ENCODE measurements at regions of chr2 and their contacts with region 1.

Region 1: DNA sequence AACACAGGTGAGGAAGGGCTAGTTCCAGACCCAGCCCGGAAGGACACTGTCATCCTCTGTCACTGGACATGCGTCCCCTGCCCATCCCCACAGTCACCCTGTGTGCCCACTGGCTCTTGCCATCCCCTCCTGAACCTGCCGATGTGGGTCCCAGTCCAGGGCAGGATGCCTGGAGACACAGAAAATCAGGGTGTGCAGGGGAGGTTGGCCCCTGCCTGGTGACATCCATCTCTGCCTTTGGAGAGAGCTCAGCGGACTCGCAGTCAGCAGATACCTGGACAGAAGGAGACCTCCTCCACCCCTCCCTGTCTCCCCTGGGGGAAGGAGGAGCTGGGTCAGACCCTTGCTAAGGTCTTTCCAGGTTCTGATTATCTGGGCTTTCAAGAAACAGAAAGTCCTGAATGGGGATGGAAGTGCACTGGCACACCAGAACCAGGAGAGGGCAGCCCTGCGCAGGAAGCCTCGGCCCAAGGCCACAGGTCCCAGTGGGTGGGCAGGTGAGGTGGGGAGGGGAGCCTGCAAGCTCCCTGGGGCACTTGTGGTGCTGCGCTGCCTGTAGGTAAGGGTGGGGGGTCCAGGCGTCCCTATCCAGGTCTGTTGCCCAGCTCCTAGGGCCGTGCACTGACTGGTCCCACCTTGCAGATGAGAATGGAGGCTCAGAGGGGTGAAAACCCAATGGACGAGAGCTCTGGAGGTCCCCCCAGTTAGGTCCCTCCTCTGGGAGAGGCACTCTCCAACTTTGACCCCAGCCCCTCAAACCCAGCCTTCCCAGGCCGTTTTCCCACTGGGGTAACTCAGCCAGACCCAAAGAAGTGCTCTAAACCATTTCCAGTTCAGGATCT is 9.7 kb upstream of the OTOS start:
- DNase-seq: peak; percentile 50
- H3K4me3 Mint-ChIP-seq: no peak overlapping the region
- H3K27ac Mint-ChIP-seq: no peak overlapping the region
- H3K4me1 Mint-ChIP-seq: no peaks in the 10 kb centered on the region
- H3K27me3 Mint-ChIP-seq: peaks cover 37% of the 10 kb centered on the region
- CTCF ChIP-seq: peak; percentile 83

Region 2: DNA sequence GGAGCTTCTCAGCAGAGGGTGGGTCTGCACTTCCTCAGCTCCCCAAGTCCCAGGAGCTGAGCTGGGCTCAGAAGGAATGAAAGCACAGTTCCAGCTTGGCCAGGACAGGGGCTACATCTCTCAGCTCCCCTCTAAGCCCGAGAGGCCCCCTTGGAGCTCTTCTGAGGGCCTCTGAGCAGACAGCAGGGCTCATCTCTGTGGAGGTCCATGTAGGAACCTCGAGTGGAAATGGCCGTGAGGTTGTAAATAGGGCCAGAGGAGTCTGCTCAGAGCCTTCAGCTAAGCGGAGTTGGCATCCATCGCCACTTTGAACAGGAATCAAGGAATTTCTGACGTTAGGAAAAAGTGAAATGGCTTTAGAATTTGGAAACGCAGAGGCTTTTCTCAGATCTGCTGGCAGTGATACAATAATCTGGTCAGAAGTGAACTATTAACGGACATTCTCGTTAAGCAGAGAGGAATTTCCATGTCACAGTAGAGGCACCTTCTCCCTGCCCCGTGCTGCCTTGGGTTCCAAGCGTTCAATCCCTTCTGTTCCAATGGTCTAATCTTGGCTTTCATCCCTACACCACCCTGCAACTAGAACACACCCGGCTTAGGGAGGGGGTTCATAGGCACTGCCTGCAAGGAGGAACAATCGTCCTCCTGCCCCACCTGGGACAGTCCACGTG is 338.9 kb before region 1 on chr2:
- CTCF ChIA-PET with region 1: no interaction called
- POLR2A ChIA-PET with region 1: no interaction called
- intact Hi-C with region 1: no loop called
- DNase-seq: no peak
- H3K4me3 Mint-ChIP-seq: no peak overlapping the region
- H3K27ac Mint-ChIP-seq: no peak overlapping the region
- H3K4me1 Mint-ChIP-seq: no peaks in the 10 kb centered on the region
- H3K27me3 Mint-ChIP-seq: peaks cover 70% of the 10 kb centered on the region
- CTCF ChIP-seq: no peak

Region 3: GRCh38 chr2:240205348-240205747 is 55.2 kb after region 1 on chr2:
- CTCF ChIA-PET with region 1: interaction called, 3 read pairs
- POLR2A ChIA-PET with region 1: no interaction called
- intact Hi-C with region 1: loop called (anchors 10 kb)
- DNase-seq: peak; percentile 93
- H3K4me3 Mint-ChIP-seq: no peak overlapping the region
- H3K27ac Mint-ChIP-seq: no peak overlapping the region
- H3K4me1 Mint-ChIP-seq: peaks cover 11% of the 10 kb centered on the region
- H3K27me3 Mint-ChIP-seq: peaks cover 21% of the 10 kb centered on the region
- CTCF ChIP-seq: no peak

Measured in MCF 10A (cell line).